Activated B cell treated with CpG ODN at 0.5 μM for 24 hours (primary cell): ENCODE measurements at regions of chr17 and their contacts with region 1.

Region 1: GRCh38 chr17:58317421-58318064 is 11.1 kb downstream of the TSPOAP1 start:
- DNase-seq: peak; percentile 55
- ATAC-seq: peak; percentile 97
- H3K4me3 Mint-ChIP-seq: no peak overlapping the region
- H3K27ac Mint-ChIP-seq: peak overlapping the region; percentile 79
- H3K4me1 Mint-ChIP-seq: peaks cover 15% of the 10 kb centered on the region
- H3K27me3 Mint-ChIP-seq: no peaks in the 10 kb centered on the region
- CTCF ChIP-seq: no peak

Region 2: DNA sequence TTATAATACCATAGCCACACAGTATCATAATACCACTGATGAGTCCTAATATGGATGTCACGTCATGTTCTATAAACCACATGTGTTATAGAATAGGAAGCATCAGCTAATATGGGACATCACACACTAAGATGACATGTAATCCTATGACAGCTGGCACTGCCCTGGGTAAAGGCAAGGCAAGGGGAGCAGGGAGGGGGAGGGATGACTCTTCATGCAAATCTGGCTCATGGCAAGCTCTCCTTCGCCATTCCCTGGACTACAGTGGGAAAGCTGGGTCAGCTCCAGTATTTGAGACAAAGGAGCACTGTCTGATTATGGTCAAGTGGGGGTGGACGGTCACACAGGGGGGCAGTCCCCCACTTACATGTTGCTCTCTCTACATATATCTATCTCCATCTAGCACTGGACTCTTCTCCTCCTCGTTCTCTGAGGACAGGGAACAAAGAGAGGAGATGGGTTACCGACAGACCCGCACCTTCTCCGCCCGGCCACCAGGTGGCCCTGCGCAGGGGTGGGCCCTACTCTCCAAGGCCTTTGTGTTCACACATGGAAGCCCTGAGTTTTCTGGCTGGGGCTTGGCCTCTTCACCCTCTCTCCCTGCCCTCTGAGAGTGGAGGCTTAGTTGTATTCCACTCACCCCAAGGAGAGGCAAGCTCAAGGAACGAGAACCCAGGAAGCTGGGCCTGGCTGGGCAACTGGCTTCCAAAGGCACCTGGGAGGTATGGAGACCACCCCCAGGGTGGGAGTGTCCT is 13.4 kb before region 1 on chr17:
- CTCF ChIA-PET with region 1: interaction called, 12 read pairs
- POLR2A ChIA-PET with region 1: no interaction called
- intact Hi-C with region 1: no loop called
- DNase-seq: no peak
- ATAC-seq: peak; percentile 96
- H3K4me3 Mint-ChIP-seq: no peak overlapping the region
- H3K27ac Mint-ChIP-seq: no peak overlapping the region
- H3K4me1 Mint-ChIP-seq: peaks cover 7% of the 10 kb centered on the region
- H3K27me3 Mint-ChIP-seq: no peaks in the 10 kb centered on the region
- CTCF ChIP-seq: peak; percentile 32

Region 3: DNA sequence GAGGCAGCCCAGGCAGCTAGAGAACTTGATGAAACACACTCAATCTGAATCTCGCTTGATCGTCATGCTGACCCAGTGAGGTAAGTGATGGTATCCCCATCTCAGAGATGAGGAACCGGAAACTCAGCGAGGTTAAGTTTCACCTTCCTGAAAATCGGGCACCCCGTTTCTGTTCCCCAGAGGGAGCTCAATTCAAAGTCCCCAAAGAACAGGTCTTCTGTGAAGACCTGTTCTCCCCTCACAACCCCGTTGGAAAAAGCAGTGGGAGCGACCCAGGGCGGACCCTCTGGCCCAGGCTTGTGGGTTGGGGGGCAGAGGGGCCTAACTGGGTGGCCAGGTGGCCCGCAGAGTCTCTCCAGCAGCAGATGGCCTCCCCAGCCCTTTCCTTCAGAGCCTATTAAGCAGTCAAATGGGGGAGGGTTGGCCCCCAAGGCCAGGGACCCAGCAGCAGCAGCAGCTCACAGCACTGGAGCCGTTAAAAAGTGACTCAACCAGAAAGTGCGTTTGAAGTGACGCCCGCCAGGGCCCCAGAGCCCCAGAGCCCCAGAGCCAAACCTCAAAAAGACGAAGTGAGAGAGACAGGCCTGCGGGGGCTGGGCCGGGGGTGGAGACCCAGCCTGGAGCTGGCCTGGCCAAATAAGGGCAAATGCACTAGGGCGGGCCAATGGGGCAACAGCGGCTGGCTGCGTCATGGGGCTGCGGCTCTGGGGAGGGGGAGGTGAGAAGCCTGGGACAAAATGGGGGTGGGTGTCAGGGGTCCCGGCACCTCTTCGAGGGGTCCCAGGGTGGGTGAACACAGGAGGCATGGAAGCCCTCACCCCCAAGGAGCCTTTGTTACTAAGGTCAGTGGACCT is 20.3 kb after region 1 on chr17:
- CTCF ChIA-PET with region 1: interaction called, 129 read pairs
- POLR2A ChIA-PET with region 1: interaction called, 3,007 read pairs
- intact Hi-C with region 1: no loop called
- DNase-seq: peak; percentile 84
- ATAC-seq: peak; percentile 63
- H3K4me3 Mint-ChIP-seq: peak overlapping the region; percentile 100
- H3K27ac Mint-ChIP-seq: peak overlapping the region; percentile 99
- H3K4me1 Mint-ChIP-seq: peaks cover 97% of the 10 kb centered on the region
- H3K27me3 Mint-ChIP-seq: no peaks in the 10 kb centered on the region
- CTCF ChIP-seq: no peak

Region 4: DNA sequence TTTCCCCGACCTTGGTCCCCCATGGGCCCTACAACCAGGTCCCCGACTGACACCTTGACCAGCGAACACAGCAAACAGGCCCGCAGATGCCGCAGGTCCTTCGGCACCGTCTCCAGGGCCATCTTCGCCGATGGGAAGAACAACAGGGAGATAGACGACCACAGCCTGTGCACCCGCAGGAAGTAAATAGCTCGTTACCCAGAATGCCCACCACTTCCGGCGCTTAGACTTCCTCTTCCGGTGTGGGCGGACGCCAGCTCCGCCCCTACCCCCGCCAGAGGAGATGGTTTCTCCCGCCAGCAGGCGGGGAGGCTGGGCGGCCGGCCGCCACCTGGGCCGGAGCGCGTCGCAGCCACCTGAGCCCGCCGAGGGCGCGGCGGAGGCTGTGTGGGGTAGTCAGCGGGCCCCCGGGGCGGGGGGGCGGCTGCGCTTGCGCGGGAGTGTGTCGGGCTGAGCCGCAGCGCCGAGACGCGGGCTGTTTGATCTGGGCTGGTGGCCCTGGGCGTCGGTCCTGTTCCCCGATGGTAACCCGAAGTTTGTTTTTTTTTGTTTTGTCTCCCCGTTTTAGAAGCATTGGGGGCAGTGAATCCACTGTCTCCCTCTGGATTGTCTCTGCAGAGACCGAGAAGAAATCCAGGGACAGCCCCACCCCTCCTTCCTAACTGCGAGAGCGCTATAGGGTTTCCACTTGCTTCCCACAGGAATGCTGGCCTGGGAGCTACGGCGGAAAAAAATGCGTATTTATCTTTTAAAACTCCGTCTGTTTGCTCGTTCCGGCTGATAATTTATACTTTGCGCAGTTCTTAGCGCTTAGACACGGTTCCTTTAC is 34.7 kb after region 1 on chr17 and contains the start of gene SUPT4H1:
- CTCF ChIA-PET with region 1: interaction called, 42 read pairs
- POLR2A ChIA-PET with region 1: interaction called, 3,007 read pairs
- intact Hi-C with region 1: loop called (anchors 1 kb)
- DNase-seq: peak; percentile 91
- ATAC-seq: peak; percentile 92
- H3K4me3 Mint-ChIP-seq: peak within 1 kb of the TSS; percentile 100
- H3K27ac Mint-ChIP-seq: peak within 1 kb of the TSS; percentile 97
- H3K4me1 Mint-ChIP-seq: peaks cover 49% of the 10 kb centered on the region
- H3K27me3 Mint-ChIP-seq: no peaks in the 10 kb centered on the region
- CTCF ChIP-seq: no peak
- total RNA-seq, gene SUPT4H1: 90.2 and 100 TPM in 2 replicates

Region 5: DNA sequence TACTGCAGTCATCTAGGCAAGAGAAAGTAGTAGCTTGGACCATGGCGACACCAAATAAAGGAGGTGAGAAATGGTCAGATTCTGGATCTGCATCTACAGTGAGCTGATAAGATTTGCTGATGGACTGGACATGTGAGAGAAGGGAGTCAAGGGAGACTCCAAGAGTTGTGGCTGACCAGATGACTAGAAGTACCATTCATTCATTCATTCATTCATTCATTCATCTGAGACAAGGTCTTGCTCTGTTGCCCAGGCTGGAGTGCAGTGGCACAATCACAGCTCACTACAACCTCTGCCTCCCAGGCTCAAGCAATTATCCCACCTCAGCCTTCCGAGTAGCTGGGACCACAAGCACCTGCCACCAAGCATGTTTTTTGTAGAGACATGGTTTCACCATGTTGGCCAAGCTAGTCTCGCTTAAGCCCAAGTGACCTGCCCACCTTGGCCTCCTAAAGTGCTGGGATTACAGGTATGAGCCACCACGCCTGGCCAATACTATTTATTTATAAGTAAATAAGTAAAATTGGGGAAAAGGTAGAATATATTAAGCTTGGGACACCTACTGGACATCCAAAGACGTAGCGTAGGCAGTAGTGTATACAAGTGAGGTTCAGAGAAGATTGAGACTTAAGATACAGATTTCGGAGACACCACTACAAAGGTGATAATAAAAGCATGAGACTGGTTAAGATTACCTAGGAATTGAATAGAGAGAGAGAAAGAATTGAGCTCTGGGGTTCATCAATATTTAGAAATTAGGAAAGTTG is 115.4 kb after region 1 on chr17:
- CTCF ChIA-PET with region 1: interaction called, 14 read pairs
- POLR2A ChIA-PET with region 1: interaction called, 3 read pairs
- intact Hi-C with region 1: no loop called
- DNase-seq: no peak
- ATAC-seq: no peak
- H3K4me3 Mint-ChIP-seq: no peak overlapping the region
- H3K27ac Mint-ChIP-seq: no peak overlapping the region
- H3K4me1 Mint-ChIP-seq: peaks cover 3% of the 10 kb centered on the region
- H3K27me3 Mint-ChIP-seq: no peaks in the 10 kb centered on the region
- CTCF ChIP-seq: no peak

Region 6: DNA sequence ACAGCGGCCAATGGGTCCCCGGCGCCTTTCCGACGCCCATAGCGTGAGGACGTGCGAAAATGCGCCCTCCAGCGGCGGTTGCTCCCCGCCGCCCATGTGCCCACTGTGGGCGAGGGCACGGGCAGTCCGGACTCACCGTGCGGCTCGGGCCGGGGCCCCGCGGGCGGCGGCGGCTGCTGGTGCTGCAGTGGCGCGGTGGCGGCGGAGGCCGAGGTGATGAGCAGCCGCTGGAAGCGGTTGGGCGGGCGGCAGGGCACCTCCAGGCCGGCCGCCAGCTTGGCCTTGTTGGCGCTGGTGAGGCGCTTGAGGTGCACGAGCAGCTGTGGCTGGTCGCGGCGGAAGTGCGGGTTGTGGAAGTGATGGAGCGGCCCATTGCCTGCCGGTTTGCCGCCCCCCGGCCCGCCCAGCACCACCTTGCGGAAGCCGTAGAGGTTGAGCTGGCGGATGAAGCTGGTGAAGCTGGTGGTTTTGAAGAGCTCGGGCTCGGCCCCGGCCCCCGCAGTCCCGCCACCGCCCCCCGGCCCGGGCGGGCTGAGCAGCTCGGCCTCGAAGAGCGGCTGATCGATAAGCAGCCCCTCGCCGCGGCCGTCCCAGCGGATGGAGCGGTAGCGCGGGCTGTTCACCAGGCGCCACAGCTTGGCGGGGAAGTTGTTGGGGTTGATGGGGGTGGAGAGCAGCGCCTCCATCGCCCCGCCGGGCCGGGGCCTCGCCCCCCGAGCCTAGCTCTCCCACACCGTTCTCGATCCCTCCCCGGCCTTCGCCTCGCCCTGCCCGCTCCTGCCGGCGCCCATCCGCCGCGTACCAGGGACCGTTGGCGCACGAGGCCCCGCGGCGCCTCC is 170.3 kb after region 1 on chr17 and contains the start of gene HSF5:
- CTCF ChIA-PET with region 1: interaction called, 35 read pairs
- POLR2A ChIA-PET with region 1: interaction called, 11 read pairs
- intact Hi-C with region 1: loop called (anchors 1 kb)
- DNase-seq: peak; percentile 79
- ATAC-seq: peak; percentile 96
- H3K4me3 Mint-ChIP-seq: peak within 1 kb of the TSS; percentile 69
- H3K27ac Mint-ChIP-seq: peak within 1 kb of the TSS; percentile 66
- H3K4me1 Mint-ChIP-seq: peaks cover 19% of the 10 kb centered on the region
- H3K27me3 Mint-ChIP-seq: no peaks in the 10 kb centered on the region
- CTCF ChIP-seq: no peak
- total RNA-seq, gene HSF5: 4.5 and 5.5 TPM in 2 replicates

Region 7: DNA sequence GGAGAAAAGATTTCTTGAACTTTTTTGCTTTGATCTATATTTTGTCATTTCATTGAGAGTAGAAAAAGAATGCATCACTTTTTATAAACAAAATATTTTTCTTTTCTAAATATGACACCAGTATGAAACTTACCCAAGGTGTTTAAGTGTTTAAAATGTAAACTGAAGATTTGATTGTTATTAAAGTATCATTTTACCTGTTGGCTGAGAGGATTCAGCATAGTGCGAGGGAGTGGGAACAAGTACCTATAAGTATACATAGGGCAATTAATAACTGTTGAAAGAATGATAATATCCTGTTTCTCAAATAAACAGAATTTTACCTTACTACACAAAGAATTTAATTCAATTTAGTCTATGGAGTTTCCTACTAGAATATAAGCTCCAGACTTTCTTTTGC is 459.9 kb after region 1 on chr17:
- CTCF ChIA-PET with region 1: no interaction called
- POLR2A ChIA-PET with region 1: no interaction called
- intact Hi-C with region 1: no loop called
- DNase-seq: no peak
- ATAC-seq: no peak
- H3K4me3 Mint-ChIP-seq: no peak overlapping the region
- H3K27ac Mint-ChIP-seq: no peak overlapping the region
- H3K4me1 Mint-ChIP-seq: no peaks in the 10 kb centered on the region
- H3K27me3 Mint-ChIP-seq: peaks cover 4% of the 10 kb centered on the region
- CTCF ChIP-seq: no peak